ENCODE measurements at regions of chr3 and their contacts with region 1.

Region 1: DNA sequence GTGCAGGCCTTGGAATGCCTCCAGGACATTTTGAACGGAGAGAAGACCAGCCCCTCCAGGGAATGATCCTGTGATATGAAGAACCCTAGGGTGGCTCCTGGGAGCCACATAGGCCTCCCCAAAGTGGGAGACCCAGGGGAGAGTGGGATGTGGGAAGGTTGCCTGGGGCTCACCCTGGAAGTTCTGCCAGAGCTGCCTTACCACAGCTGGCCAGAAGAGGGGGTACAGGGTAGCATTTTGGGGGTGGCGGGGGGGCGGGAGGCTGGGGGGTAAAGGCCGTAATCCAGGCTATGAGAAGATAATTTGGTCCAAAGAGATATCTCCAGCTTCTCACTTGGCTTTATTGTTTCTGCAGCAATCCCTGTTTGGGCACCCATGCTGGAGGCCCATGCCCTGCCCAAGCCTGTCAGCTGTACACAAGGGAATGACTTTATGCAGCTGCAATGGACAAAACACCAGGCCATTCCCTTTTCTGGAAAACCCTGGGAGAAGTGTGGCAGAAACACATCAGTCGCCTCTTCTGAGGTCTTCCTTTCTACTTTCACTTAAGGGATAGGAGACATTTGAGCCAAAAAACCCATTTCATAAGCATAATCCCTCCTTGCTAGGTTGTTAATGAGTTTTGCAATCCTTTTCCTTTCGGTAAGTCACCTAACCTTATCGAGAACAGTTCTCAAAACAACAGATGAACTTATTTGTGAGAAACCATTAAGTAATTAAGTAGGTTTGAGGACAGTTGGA is 11.0 kb upstream of the MUSTN1 start:
- DNase-seq: peak in 5 of 9 experiments; percentile 28 to 40 (median 34)
- ATAC-seq: peak; percentile 49
- H3K4me3 ChIP-seq: no peak overlapping the region
- H3K4me3 Mint-ChIP-seq: no peak overlapping the region
- H3K27ac ChIP-seq: no peak overlapping the region
- H3K27ac Mint-ChIP-seq: no peak overlapping the region
- H3K4me1 ChIP-seq: no peaks in the 10 kb centered on the region
- H3K4me1 Mint-ChIP-seq: no peaks in the 10 kb centered on the region
- H3K27me3 ChIP-seq: no peaks in the 10 kb centered on the region
- H3K27me3 Mint-ChIP-seq: no peaks in the 10 kb centered on the region
- CTCF ChIP-seq: peak; percentile 46

Region 2: GRCh38 chr3:52983336-52983807 is 137.5 kb after region 1 on chr3:
- CTCF ChIA-PET with region 1: no interaction called
- POLR2A ChIA-PET with region 1: no interaction called
- intact Hi-C with region 1: loop called in 1 of 2 experiments (anchors 2 kb)
- DNase-seq: peak; percentile 10 to 84 (median 58)
- ATAC-seq: peak; percentile 86
- H3K4me3 ChIP-seq: no peak overlapping the region
- H3K4me3 Mint-ChIP-seq: peak overlapping the region; percentile 68
- H3K27ac ChIP-seq: peak overlapping the region; percentile 26 to 66
- H3K27ac Mint-ChIP-seq: peak overlapping the region; percentile 87
- H3K4me1 ChIP-seq: peaks cover 38% of the 10 kb centered on the region
- H3K4me1 Mint-ChIP-seq: peaks cover 46% of the 10 kb centered on the region
- H3K27me3 ChIP-seq: no peaks in the 10 kb centered on the region
- H3K27me3 Mint-ChIP-seq: no peaks in the 10 kb centered on the region
- CTCF ChIP-seq: no peak

Region 3: GRCh38 chr3:53092942-53093341 is 247.1 kb after region 1 on chr3:
- CTCF ChIA-PET with region 1: no interaction called
- POLR2A ChIA-PET with region 1: no interaction called
- intact Hi-C with region 1: no loop called
- DNase-seq: no peak
- ATAC-seq: no peak
- H3K4me3 ChIP-seq: no peak overlapping the region
- H3K4me3 Mint-ChIP-seq: no peak overlapping the region
- H3K27ac ChIP-seq: no peak overlapping the region
- H3K27ac Mint-ChIP-seq: no peak overlapping the region
- H3K4me1 ChIP-seq: no peaks in the 10 kb centered on the region
- H3K4me1 Mint-ChIP-seq: peaks cover 3% of the 10 kb centered on the region
- H3K27me3 ChIP-seq: no peaks in the 10 kb centered on the region
- H3K27me3 Mint-ChIP-seq: no peaks in the 10 kb centered on the region
- CTCF ChIP-seq: no peak

Region 4: DNA sequence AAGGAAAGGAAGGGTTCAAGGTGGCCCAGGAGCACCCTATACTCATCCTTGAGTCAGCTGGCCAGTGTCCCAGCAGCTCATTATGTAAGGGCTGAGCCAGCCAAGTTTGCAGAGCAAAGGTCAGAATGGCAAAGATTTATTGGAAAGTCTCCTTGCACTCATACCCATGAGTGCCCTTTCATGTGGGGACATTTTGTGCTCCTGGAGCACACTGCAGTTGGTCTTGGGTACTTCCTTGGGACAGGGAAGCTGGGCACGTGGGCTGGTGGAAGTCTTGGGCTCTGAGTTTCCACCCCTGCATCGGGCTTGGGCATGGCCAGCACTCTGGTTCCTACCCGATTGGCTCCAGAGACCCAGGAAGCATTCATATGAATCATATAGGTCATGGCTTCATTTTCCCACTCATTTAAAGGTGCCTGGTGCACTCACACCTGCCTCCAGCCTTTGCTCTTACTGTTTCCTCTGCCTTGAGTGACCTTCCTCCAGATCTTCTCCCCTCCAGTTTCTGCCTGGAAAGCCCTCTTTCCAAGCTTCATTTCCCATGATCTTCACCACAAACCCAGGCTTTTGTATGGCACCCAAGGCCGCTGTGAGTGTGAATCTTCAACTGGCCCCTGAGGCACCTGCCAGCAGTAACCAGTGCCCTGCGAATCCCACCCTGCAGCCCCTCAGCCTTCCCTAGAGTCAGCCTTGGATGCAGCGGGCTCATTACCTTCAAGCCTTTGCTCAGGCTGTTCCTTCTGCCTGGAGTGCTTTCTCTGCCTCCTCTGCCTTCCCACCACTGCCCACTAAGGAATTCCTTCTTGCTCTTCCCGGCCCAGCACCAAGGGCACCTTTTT is 304.6 kb after region 1 on chr3:
- CTCF ChIA-PET with region 1: no interaction called
- POLR2A ChIA-PET with region 1: no interaction called
- intact Hi-C with region 1: no loop called
- DNase-seq: no peak
- ATAC-seq: no peak
- H3K4me3 ChIP-seq: no peak overlapping the region
- H3K4me3 Mint-ChIP-seq: no peak overlapping the region
- H3K27ac ChIP-seq: no peak overlapping the region
- H3K27ac Mint-ChIP-seq: no peak overlapping the region
- H3K4me1 ChIP-seq: no peaks in the 10 kb centered on the region
- H3K4me1 Mint-ChIP-seq: no peaks in the 10 kb centered on the region
- H3K27me3 ChIP-seq: peaks cover under 1 to 6% of the 10 kb centered on the region in 2 experiments
- H3K27me3 Mint-ChIP-seq: peaks cover 18% of the 10 kb centered on the region
- CTCF ChIP-seq: no peak

Measured in CD8-positive, alpha-beta T cell (primary cell).